ENCODE measurements at regions of chr5 and their contacts with region 1.

Region 1: DNA sequence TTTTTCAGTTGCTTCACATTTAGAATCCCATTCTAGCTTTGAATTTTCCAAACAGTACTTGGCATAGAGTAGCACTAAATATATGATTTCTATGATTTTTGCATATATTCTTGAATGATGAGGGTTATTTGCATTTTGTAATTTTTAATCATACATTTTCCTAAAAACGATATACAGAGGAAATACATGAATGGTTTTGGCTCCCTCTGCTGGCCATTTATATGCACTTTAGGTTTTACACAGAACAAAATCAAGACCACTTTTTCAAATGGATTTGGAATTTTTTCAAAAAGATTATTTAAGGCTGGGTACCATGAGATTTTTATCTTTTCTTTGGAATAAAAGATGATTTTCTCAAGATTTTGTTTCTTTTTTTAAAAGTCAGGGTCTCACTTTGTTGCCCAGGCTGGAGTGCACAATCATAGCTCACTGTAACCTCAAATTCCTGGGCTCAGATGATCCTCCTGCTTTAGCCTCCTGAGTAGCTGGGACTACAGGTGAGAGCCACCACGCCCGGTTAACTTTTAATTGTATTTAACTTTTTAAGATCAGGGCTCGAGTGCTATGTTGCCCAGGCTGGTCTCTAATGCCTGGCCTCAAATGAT is 16.7 kb upstream of the COMMD10 start:
- DNase-seq: no peak
- ATAC-seq: peak in 1 of 2 donors; percentile 61
- H3K4me3 ChIP-seq: no peak overlapping the region
- H3K27ac ChIP-seq: no peak overlapping the region
- H3K4me1 ChIP-seq: peaks cover 3% of the 10 kb centered on the region
- H3K27me3 ChIP-seq: peaks cover 3% of the 10 kb centered on the region
- CTCF ChIP-seq: peak; percentile 88

Region 2: GRCh38 chr5:115634343-115635132 is 433.6 kb before region 1 on chr5:
- intact Hi-C with region 1: loop called (anchors 5 kb)
- DNase-seq: peak; percentile 88
- ATAC-seq: peak; percentile 96 to 99
- H3K4me3 ChIP-seq: peak overlapping the region; percentile 50
- H3K27ac ChIP-seq: peak overlapping the region; percentile 87
- H3K4me1 ChIP-seq: peaks cover 11% of the 10 kb centered on the region
- H3K27me3 ChIP-seq: no peaks in the 10 kb centered on the region
- CTCF ChIP-seq: peak; percentile 93

Region 3: GRCh38 chr5:115857636-115858309 is 210.4 kb before region 1 on chr5:
- intact Hi-C with region 1: no loop called
- DNase-seq: no peak
- ATAC-seq: no peak
- H3K4me3 ChIP-seq: no peak overlapping the region
- H3K27ac ChIP-seq: no peak overlapping the region
- H3K4me1 ChIP-seq: peaks cover 13% of the 10 kb centered on the region
- H3K27me3 ChIP-seq: no peaks in the 10 kb centered on the region
- CTCF ChIP-seq: no peak

Region 4: DNA sequence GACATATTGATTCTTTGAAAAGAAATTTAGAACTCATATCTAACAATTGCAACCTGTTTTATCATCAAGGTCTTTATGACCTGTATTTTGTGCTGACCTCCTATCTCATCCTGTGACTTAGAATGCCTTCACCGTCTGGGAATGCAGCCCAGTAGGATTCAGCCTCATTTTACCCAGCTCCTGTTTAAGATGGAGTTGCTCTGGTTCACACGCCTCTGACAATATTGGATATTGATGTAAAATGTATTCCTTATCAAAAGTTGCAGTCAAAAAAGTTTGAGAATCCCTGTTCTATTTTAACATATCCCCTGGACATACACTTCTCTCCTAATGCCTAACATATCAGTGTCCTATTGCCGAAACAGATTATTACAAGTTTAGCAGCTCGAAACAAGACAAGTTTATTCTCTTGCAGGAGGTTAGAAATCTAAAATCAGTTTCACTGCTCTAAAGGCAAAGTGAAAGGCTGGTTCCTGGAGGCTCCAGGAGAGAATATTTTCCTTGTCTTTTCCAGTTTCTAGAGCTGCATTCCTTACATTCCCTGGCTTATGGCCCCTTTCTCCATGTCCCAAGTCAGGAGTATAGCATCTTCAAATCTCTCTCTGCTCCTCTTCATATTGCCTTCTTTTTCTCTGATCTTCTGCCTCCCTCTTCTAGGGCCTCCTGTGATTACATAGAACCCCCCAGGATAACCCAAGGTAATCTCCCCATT is 137.3 kb before region 1 on chr5:
- intact Hi-C with region 1: no loop called
- DNase-seq: no peak
- ATAC-seq: no peak
- H3K4me3 ChIP-seq: no peak overlapping the region
- H3K27ac ChIP-seq: no peak overlapping the region
- H3K4me1 ChIP-seq: no peaks in the 10 kb centered on the region
- H3K27me3 ChIP-seq: no peaks in the 10 kb centered on the region
- CTCF ChIP-seq: no peak